ENCODE measurements at regions of chr5 and their contacts with region 1.

Region 1: GRCh38 chr5:95646554-95647431 is at the start of gene RFESD:
- DNase-seq: peak; percentile 93 to 98 (median 96)

Region 2: DNA sequence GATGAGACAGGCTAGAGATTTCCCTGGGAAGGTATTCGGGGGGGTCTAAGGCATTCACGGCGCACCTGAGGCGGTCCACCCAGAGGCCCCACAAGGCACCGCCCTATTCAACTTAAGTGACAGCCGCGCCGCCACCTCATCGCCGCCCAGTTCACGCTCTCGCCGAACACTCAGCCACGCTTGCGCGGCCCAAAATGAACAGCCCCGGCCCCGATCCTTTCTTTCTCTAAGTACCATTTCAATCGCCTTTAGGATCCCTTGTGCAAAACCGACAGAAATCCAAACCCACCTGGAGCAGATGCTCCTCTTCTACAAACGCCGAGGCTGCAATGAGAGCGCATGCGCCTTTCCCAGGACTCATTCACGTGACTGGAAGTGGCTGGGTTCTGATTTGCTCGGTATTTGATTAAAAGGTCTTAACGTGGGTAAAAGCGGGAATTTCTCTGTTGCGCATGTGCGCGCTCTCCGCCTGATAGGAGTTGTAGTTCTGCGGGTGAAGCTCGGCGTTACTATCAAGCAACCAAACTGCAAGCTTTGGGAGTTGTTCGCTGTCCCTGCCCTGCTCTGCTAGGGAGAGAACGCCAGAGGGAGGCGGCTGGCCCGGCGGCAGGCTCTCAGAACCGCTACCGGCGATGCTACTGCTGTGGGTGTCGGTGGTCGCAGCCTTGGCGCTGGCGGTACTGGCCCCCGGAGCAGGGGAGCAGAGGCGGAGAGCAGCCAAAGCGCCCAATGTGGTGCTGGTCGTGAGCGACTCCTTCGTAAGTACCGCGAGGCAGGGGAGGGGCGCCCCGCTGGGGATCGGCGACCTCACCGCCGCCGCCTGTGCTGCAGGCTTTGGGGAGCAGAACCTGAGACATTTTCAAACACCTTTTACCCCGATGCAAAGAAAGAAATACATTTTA is 91.9 kb before region 1 on chr5 and contains the starts of genes ARSK and SKIC3:
- intact Hi-C with region 1: loop called (anchors 10 kb)
- DNase-seq: peak; percentile 87 to 98 (median 95)

Region 3: GRCh38 chr5:95846554-95847260 is 199.9 kb after region 1 on chr5:
- intact Hi-C with region 1: loop called (anchors 2 kb)
- DNase-seq: peak in 41 of 42 donors; percentile 42 to 94 (median 83)

Region 4: GRCh38 chr5:95949810-95950209 is 303.0 kb after region 1 on chr5:
- intact Hi-C with region 1: no loop called
- DNase-seq: no peak

Measured in head of caudate nucleus (tissue), 42 donors.